ENCODE measurements at regions of chr2 and their contacts with region 1.

Region 1: GRCh38 chr2:218292048-218293014 is at the start of gene TMBIM1:
- DNase-seq: no peak
- H3K4me3 ChIP-seq: peak within 1 kb of the TSS; percentile 75 to 79
- H3K27ac ChIP-seq: peak within 1 kb of the TSS; percentile 94 to 96
- H3K4me1 ChIP-seq: peaks cover 33% of the 10 kb centered on the region
- H3K27me3 ChIP-seq: no peaks in the 10 kb centered on the region
- CTCF ChIP-seq: peak; percentile 89 to 97 (median 92)
- POLR2A ChIP-seq: peak; percentile 91
- total RNA-seq, gene TMBIM1: 139 to 193 TPM

Region 2: DNA sequence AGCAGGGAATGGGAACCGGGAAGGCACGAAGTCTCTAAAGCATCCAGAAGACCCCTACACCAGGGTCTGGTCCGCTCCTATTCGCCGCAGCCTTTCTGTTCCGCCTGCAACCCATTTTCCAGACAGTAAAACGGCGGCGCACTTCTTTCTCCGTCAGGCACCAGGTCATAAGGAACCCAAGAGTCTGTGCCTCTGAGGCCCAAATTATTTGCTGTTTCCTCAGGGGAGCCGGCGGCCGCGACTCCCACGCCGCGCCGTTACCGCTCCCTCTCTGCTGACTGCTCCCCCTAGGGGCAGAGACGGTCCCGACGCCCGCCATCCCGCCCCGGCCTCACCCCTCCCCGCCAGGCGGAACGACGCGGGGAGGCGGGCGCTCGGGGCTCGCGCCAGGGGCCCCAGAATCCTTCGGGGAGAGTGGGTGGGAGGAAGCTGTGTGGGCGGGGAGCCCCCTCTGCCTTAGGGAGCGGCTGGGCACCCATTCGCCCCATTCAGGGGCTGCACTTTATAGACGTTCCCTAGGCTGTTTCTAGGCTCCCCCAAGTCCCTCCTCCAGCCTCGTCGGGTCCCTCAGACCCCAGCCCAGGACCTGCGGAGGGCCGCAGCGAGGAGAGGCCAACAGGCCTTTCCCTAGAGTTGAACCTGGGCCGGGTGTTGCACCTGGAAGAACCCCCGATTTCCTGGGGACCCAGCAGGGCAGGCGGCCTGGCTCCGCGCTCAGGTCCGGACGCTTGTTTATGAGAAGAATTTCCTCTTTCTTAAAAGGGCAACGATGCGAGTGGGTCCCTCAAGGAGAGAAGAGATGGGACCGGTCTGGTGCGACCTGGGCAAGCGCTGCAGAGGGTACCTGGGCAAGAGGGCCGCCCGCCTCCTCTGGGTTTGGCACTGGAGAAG is 103.7 kb after region 1 on chr2:
- intact Hi-C with region 1: loop called (anchors 2 kb)
- DNase-seq: peak; percentile 92
- H3K4me3 ChIP-seq: peak overlapping the region; percentile 99 to 100
- H3K27ac ChIP-seq: peak overlapping the region; percentile 99 to 100
- H3K4me1 ChIP-seq: peaks cover 3% of the 10 kb centered on the region
- H3K27me3 ChIP-seq: no peaks in the 10 kb centered on the region
- CTCF ChIP-seq: peak; percentile 82 to 99 (median 98)
- POLR2A ChIP-seq: peak; percentile 16

Region 3: GRCh38 chr2:218466016-218466521 is 173.7 kb after region 1 on chr2:
- intact Hi-C with region 1: loop called (anchors 10 kb)
- DNase-seq: no peak
- H3K4me3 ChIP-seq: no peak overlapping the region
- H3K27ac ChIP-seq: no peak overlapping the region
- H3K4me1 ChIP-seq: no peaks in the 10 kb centered on the region
- H3K27me3 ChIP-seq: no peaks in the 10 kb centered on the region
- CTCF ChIP-seq: peak in 3 of 4 experiments; percentile 42 to 60 (median 55)
- POLR2A ChIP-seq: no peak

Region 4: GRCh38 chr2:218659258-218659987 is 367.1 kb after region 1 on chr2 and contains the starts of genes BCS1L and ZNF142:
- intact Hi-C with region 1: loop called (anchors 5 kb)
- DNase-seq: peak; percentile 92
- H3K4me3 ChIP-seq: peak within 1 kb of the TSS; percentile 68 to 82
- H3K27ac ChIP-seq: peak within 1 kb of the TSS; percentile 70 to 81
- H3K4me1 ChIP-seq: no peaks in the 10 kb centered on the region
- H3K27me3 ChIP-seq: no peaks in the 10 kb centered on the region
- CTCF ChIP-seq: peak in 1 of 4 experiments; percentile 8
- POLR2A ChIP-seq: peak; percentile 48
- total RNA-seq, gene BCS1L: 40.3 to 42.9 TPM
- total RNA-seq, gene ZNF142: 25.5 to 34.7 TPM

Measured in prostate gland (tissue), 2 donors.